ENCODE measurements at regions of chr7 and their contacts with region 1.

Region 1: DNA sequence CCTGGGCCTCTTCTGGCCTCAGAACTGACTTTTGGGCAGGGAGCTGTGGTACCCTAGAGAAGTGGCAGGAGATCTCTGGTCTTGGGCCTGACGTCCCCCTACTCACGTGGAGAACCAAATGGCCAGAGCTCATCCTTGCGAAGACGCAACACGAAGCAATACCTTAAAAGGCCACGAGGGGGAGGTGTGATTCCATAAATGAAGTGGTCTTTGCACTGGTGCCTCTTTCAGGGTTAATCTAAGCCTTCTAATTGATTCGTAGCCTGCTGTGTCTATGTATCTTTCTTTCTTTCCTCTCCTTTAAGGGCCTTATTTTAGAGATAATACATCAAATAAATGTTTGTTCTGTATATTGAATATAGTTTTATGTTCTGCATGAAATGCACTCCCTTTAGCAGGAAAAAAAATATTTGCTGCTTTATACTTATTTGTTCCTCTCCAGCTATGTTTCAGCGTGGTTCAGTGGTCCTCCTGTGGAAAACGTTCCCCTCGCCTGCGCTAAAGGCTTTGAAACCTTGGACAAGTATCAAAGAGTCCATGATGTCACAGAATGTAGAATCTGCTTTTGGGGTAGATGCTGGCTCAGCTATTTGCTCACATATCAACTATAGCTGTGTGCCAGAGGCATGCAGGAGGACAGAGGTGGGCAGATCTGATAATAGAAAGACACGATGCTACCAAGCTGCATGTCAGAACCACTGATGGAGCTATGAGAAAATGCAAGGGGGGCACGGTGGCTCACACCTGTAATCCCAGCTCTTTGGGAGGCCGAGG is 41.0 kb downstream of the STRA8 start:
- DNase-seq: peak; percentile 56 to 80
- ATAC-seq: peak; percentile 79 to 94
- H3K4me3 ChIP-seq: no peak overlapping the region
- H3K27ac ChIP-seq: no peak overlapping the region
- H3K4me1 ChIP-seq: no peaks in the 10 kb centered on the region
- CTCF ChIP-seq: peak; percentile 83
- EP300 ChIP-seq: no peak
- POLR2A ChIP-seq: no peak
- RAD21 ChIP-seq: peak; percentile 86 to 89

Region 2: DNA sequence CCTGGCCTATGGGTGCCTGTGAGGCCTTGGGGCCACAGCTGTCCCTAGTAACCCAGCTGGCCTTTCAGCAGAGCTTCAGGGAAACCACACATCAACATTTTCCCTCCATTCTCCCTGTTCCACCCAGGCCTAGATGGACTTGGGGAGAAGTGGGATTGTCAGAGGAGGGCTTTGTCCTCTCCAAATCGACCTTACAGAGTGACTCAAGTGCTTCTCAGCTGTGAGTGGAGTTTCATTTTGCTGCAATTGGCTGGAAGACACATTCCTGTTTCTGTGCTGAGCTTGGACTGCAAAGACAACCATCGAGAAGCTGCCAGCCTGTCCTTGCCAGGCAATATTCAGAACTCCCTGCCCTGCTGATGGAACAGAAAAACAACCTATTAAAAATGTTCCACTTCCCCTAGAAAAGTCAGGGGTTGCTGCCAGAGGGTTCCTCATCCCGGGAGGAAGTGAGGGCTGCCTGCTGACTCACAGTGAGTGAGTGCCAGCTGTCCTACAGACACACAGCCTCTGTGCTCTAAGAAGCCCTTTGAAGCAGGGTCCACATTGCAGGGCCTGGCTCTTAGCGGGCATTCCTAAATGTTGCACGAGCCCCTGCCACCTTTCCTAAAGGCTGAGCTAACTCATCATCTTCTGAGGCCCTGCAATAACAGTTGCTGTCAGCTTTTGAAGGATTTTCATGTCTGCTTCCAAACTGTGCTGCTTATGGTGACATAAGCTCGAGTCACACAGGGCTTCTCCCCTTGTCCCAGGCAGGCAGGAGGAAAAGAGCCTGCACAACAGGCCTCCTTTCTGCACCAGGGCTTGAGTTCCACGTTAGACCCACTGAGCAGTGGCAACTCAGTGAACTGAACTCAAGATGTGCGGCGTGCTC is 20.5 kb before region 1 on chr7:
- CTCF ChIA-PET with region 1: interaction called, 11 read pairs
- POLR2A ChIA-PET with region 1: no interaction called
- DNase-seq: peak; percentile 52 to 54
- ATAC-seq: peak; percentile 90
- H3K4me3 ChIP-seq: no peak overlapping the region
- H3K27ac ChIP-seq: peak overlapping the region; percentile 72 to 84
- H3K4me1 ChIP-seq: peaks cover 28% of the 10 kb centered on the region
- CTCF ChIP-seq: no peak
- EP300 ChIP-seq: no peak
- POLR2A ChIP-seq: no peak
- RAD21 ChIP-seq: no peak

Region 3: DNA sequence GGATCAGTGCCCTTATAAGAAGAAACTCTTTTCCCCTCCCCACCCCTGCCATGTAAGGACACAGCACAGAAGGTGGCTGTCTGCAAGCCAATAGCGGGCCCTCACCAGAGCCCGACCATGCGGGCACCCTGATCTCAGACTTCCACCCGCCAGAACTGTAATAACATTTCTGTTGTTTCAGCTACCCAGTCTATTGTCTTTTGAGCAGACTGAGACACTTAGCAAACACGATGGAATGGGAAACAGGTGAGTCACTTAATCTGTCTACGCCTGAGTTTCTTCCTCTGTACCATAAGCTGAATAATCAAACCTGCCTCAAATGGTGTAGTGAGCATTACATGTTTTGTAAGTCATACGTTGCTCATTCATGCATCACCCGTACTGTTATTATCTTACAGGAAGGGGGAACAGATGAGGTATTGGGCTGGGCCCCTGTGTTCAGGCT is 17.1 kb after region 1 on chr7:
- CTCF ChIA-PET with region 1: interaction called, 15 read pairs
- POLR2A ChIA-PET with region 1: no interaction called
- DNase-seq: peak; percentile 62 to 91
- ATAC-seq: peak; percentile 96 to 97
- H3K4me3 ChIP-seq: no peak overlapping the region
- H3K27ac ChIP-seq: peak overlapping the region; percentile 81 to 95
- H3K4me1 ChIP-seq: peaks cover 25% of the 10 kb centered on the region
- CTCF ChIP-seq: no peak
- EP300 ChIP-seq: peak in 1 of 2 experiments; percentile 55; a peak in 1 of 5 replicates
- POLR2A ChIP-seq: no peak
- RAD21 ChIP-seq: no peak

Region 4: DNA sequence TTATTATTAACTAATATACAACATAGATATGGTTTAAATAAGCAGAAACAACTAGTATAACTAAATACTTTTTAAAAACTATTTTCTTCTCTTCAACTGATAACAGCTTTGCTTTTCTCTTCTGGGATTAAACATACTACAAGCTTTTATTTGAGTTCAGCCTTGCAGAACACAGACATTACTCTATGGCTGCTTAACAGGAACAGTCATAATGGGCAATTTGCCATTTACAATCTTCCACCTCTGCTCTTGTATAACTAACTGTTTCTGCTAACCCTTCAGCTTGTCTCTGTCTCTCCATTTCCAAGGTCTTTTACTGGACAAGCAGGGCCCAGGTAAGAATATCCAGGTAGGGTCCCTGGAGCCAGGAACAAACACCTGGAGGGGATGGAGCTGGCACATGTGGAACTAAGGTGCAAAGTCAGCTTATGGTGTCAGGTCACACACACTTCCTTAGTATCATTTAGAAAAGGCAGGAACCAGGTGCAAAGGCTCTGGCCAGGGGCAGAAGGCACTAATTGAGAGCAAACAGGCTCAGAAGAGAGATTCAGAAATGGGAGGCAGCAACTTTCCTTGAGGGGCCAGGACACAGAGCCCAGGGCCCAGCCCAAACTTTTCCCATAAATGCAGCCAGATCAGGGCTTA is 52.1 kb after region 1 on chr7:
- CTCF ChIA-PET with region 1: interaction called, 388 read pairs
- POLR2A ChIA-PET with region 1: no interaction called
- DNase-seq: no peak
- ATAC-seq: no peak
- H3K4me3 ChIP-seq: no peak overlapping the region
- H3K27ac ChIP-seq: no peak overlapping the region
- H3K4me1 ChIP-seq: no peaks in the 10 kb centered on the region; the same call in 2 of the 3 replicates
- CTCF ChIP-seq: no peak
- EP300 ChIP-seq: no peak
- POLR2A ChIP-seq: no peak
- RAD21 ChIP-seq: no peak

Region 5: GRCh38 chr7:135414850-135415439 is 140.3 kb after region 1 on chr7:
- CTCF ChIA-PET with region 1: interaction called, 17 read pairs
- POLR2A ChIA-PET with region 1: no interaction called
- DNase-seq: peak; percentile 16 to 83
- ATAC-seq: peak; percentile 80 to 90
- H3K4me3 ChIP-seq: no peak overlapping the region
- H3K27ac ChIP-seq: no peak overlapping the region
- H3K4me1 ChIP-seq: no peaks in the 10 kb centered on the region
- CTCF ChIP-seq: peak; percentile 68
- EP300 ChIP-seq: no peak
- POLR2A ChIP-seq: no peak
- RAD21 ChIP-seq: peak; percentile 59 to 60